Transverse colon (tissue), 4 donors: ENCODE measurements at regions of chr3 and their contacts with region 1.

Region 1: DNA sequence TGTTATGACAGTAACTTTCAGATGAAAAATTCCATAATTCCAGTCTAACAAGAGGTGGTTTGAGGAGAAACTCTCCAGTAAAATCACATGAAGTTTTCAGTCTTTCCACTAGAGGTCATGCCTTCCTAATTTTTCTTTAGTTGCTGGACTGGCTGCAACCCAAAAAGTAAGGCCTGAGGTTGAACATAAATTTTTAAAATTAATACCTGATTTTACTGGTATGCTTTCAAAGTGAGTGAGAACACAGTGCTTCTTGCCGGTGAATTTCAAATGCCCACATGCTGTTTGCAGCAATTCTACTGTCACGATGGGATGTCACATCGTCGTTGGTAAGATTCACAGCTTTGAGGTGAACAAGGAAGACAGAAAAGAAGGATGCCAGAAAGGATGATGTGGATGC is 89.0 kb upstream of the FGF12 start:
- DNase-seq: no peak
- H3K4me3 ChIP-seq: no peak overlapping the region
- H3K27ac ChIP-seq: no peak overlapping the region
- H3K4me1 ChIP-seq: peaks cover 0 to 12% (median 2%) of the 10 kb centered on the region in 4 donors
- H3K27me3 ChIP-seq: no peaks in the 10 kb centered on the region
- CTCF ChIP-seq: peak; percentile 61 to 79 (median 71)
- EP300 ChIP-seq: no peak
- POLR2A ChIP-seq: no peak

Region 2: GRCh38 chr3:192929755-192930547 is 113.6 kb after region 1 on chr3:
- in situ Hi-C with region 1: no loop called
- intact Hi-C with region 1: loop called (anchors 10 kb)
- DNase-seq: no peak
- H3K4me3 ChIP-seq: no peak overlapping the region
- H3K27ac ChIP-seq: no peak overlapping the region
- H3K4me1 ChIP-seq: no peaks in the 10 kb centered on the region
- H3K27me3 ChIP-seq: no peaks in the 10 kb centered on the region
- CTCF ChIP-seq: no peak
- EP300 ChIP-seq: no peak
- POLR2A ChIP-seq: no peak

Region 3: GRCh38 chr3:193040836-193041672 is 224.7 kb after region 1 on chr3:
- in situ Hi-C with region 1: loop called (anchors 5 to 10 kb)
- intact Hi-C with region 1: loop called (anchors 2 kb)
- DNase-seq: no peak
- H3K4me3 ChIP-seq: no peak overlapping the region
- H3K27ac ChIP-seq: no peak overlapping the region
- H3K4me1 ChIP-seq: no peaks in the 10 kb centered on the region
- H3K27me3 ChIP-seq: no peaks in the 10 kb centered on the region
- CTCF ChIP-seq: peak; percentile 34 to 58 (median 46)
- EP300 ChIP-seq: no peak
- POLR2A ChIP-seq: no peak